ENCODE measurements at regions of chr12 and their contacts with region 1.

Region 1: DNA sequence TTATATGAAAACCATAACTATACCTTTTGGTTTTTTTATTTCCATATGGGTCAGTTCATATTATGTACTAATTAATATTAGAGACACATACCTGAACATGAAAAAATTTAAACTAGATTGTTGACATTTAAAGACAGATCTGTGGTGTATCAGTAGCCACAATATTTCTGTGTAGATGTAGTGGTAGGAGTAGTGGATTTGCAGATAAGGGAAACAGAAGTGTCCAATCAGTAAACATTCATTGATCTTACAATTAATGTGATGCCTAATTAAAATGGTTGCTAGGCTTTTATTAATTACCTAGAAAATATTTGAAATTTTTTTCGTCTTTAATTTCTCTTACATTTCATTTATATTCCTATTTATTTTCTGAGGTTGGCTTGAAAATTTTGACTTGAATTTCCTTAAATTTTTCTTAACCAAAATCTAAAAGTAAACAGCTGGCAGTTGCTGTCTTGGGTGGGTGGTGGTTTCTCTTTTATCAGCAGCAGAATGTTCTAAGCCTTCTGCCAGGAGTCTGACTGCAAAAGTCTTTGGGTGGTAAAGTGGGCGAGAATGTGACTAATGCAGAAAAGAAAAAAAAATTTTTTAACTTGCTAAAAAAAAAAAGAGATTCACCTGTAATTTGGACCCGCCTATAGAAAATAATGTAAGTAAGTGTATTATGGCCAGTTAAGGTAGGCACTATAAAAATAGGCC is 2.4 kb downstream of the FGFR1OP2 start:
- DNase-seq: no peak
- H3K4me3 ChIP-seq: no peak overlapping the region
- H3K27ac ChIP-seq: peak overlapping the region; percentile 1
- H3K4me1 ChIP-seq: no peaks in the 10 kb centered on the region
- H3K27me3 ChIP-seq: no peaks in the 10 kb centered on the region
- CTCF ChIP-seq: no peak

Region 2: DNA sequence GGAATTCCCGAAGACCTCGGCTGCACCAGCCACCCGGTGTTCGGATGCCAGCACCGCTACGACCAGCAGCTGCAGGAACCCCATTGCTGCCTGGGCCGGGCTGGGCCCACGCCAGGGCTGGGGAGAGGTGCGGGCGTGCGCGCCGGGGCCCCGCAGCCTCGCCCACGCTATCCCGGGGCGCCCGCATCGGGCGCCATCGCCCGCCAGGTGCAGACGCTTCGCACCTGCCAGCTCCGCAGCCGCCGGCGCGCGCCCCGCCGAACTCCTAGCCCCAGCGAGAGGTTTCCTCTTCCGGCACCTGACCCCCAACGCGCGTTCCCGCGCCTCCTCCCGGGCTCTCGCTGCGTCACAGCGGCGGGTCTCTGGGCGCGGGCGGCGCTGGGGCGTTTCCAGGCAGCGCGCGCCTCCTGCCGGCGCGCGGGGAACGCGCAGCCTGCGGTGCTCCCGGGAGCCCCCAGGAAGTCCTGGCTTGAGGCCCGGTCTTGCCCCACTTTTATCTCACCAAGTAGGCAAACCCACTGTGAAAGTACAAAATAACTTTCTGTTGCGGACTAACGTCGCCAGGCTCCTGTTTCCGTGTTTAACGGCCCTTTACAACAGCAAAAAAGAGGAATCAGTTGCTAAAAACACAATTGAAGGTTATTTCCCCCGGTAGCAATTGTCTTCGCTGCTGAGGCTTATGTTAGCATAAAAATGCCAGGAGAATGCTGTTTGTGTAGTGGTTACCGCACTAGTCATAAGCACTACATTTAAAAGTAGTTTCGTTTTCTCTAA is 73.6 kb after region 1 on chr12 and contains the start of gene TM7SF3:
- intact Hi-C with region 1: loop called (anchors 5 kb)
- DNase-seq: peak; percentile 96
- H3K4me3 ChIP-seq: peak within 1 kb of the TSS; percentile 80
- H3K27ac ChIP-seq: peak within 1 kb of the TSS; percentile 90
- H3K4me1 ChIP-seq: peaks cover 8% of the 10 kb centered on the region
- H3K27me3 ChIP-seq: no peaks in the 10 kb centered on the region
- CTCF ChIP-seq: peak; percentile 97
- total RNA-seq, gene TM7SF3: 50.0 to 59.1 TPM

Region 3: DNA sequence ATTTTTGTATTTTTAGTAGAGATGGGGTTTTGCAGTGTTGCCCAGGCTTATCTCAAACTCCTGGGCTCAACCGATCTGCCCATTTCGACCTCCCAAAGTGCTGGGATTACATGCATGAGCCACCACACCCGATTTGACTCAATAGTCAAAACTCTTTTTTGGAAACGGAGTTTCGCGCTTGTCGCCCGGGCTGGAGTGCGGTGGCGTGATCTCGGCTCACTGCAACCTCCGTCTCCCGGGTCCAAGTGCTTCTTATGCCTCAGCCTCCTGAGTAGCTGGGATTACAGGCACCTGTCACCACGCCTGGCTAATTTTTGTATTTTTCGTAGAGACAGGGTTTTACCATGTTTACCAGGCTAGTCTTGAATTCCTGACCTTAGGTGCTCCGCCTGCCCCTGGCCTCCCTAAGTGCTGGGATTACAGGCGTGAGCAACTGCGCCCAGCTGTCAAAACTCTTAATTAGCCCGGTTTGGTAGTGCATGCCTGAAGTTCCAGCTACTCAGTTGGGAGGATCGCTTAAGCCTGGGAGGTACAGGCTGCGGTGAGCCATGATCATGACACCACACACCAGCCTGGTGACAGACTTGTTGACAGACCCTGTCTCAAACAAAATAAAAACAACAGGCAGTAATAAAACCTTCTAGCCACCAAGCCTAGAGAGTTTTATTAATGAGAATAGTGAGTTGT is 94.1 kb after region 1 on chr12:
- intact Hi-C with region 1: no loop called
- DNase-seq: no peak
- H3K4me3 ChIP-seq: no peak overlapping the region
- H3K27ac ChIP-seq: no peak overlapping the region
- H3K4me1 ChIP-seq: no peaks in the 10 kb centered on the region
- H3K27me3 ChIP-seq: no peaks in the 10 kb centered on the region
- CTCF ChIP-seq: no peak